ENCODE measurements at regions of chr9 and their contacts with region 1.

Region 1: DNA sequence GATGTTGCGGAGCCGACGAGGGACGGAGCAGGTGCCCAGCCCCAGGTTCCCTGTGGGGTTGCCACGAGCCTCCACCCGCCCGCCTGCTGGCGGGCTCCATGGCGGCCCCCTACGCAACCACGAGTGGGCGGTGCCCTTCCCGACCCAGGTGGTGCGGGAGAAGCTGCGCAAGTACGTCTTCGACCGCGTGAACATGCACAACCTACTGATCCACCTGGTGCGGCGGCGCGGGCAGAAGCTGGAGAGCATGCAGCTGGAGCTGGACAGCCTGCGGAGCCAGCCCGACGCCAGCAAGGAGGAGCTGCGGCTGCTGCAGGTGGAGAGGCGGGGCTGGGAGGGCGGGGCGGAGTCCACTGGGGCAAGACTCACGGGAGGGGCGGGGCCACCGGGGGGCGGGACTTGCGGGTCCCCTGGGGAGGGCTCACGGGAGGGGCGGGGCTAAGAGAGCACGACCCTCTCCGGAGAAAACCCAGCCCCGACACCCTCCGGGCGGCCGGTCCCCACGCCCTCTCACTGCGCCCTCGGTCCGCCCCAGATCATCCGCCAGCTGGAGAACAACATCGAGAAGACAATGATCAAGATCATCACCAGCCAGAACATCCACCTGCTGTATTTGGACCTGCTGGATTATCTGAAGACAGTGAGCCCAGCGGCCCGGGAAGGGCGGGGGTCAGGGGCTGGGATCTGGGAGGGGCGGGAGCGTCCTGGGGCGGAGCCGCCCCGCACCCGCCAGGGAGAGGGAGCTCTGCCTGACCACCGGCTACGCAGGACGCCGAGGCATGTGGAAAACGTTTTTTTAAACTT is 3.9 kb downstream of the CCDC183 start:
- DNase-seq: no peak
- ATAC-seq: peak; percentile 71
- H3K4me3 ChIP-seq: peak overlapping the region; percentile 37 to 57
- H3K27ac ChIP-seq: no peak overlapping the region; the same call in 1 of the 2 replicates
- H3K4me1 ChIP-seq: peaks cover 4% of the 10 kb centered on the region
- H3K27me3 ChIP-seq: no peaks in the 10 kb centered on the region
- CTCF ChIP-seq: no peak

Region 2: DNA sequence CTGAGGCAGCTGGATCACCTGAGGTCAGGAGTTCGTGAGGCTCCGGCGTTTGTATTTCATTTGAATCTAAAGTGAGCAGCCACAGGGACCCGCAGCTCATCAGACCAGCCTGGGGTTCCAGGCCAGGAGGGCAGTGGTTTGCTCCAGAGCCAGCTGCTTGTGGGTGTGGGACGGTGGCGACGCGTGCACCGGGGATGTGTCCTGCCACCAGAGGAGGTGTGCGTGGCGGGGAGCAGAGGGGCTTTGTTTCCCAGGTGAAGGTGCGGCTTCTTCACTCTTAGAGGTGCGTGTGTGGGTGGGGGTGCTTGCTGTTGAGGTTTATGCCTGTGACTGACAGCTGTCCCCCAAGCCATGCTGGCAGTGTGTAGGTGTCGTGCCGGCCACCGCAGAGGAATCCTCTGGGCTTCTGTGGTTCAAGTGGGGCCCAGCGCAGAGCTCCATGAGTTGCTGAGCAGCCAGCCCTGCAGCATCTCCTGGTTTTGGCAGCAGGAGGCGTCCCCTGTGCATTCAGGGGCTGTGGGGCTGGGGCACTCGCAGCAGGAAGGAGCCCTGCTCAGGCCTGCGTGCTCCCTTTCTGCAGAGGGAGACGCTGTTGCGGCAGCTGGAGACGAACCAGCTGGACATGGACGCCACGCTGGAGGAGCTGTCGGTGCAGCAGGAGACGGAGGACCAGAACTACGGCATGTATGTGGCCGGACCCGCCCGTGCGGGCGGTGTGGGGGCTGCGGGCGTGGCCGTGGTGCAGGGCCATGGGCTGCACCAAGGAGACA is 35.3 kb after region 1 on chr9:
- CTCF ChIA-PET with region 1: no interaction called
- POLR2A ChIA-PET with region 1: interaction called, 13 read pairs
- in situ Hi-C with region 1: no loop called
- intact Hi-C with region 1: no loop called
- DNase-seq: no peak
- ATAC-seq: no peak
- H3K4me3 ChIP-seq: no peak overlapping the region
- H3K27ac ChIP-seq: no peak overlapping the region
- H3K4me1 ChIP-seq: peaks cover 13% of the 10 kb centered on the region
- H3K27me3 ChIP-seq: no peaks in the 10 kb centered on the region
- CTCF ChIP-seq: no peak